ENCODE measurements at regions of chr1 and their contacts with region 1.

Region 1: GRCh38 chr1:156226116-156226538 is 13.3 kb downstream of the PMF1 start:
- DNase-seq: no peak
- H3K4me3 ChIP-seq: no peak overlapping the region
- H3K27ac ChIP-seq: no peak overlapping the region
- H3K4me1 ChIP-seq: 0 out of 2 replicates have a peak, but pooled peaks cover 5% of the 10 kb centered on the region
- H3K27me3 ChIP-seq: no peaks in the 10 kb centered on the region
- CTCF ChIP-seq: no peak

Region 2: GRCh38 chr1:155989242-155990004 is 236.7 kb before region 1 on chr1:
- CTCF ChIA-PET with region 1: interaction called, 11 read pairs
- POLR2A ChIA-PET with region 1: no interaction called
- intact Hi-C with region 1: no loop called
- DNase-seq: peak in 1 of 2 experiments; percentile 70
- H3K4me3 ChIP-seq: no peak overlapping the region
- H3K27ac ChIP-seq: no peak overlapping the region
- H3K4me1 ChIP-seq: peaks cover 16% of the 10 kb centered on the region
- H3K27me3 ChIP-seq: no peaks in the 10 kb centered on the region
- CTCF ChIP-seq: peak; percentile 96

Region 3: DNA sequence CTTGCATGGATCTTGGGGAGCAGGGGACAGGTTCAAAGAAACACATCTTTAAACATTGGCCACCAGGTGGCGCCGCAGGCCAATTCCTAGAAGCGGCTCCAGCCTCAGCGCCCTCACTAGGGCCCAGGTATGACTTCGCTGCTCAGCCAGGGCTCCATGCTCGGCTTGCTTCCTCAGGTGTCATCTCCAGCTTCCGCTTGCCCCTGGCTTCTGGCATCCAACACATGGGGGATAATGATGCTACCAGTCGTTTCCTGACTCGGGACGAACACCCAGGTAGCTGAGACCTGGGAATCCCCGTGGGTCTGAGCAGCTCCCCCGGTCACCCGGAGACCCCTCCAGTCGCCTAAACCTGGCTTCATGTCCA is 135.3 kb before region 1 on chr1:
- CTCF ChIA-PET with region 1: interaction called, 3 read pairs
- POLR2A ChIA-PET with region 1: no interaction called
- intact Hi-C with region 1: loop called (anchors 1 kb)
- DNase-seq: peak; percentile 81 to 84
- H3K4me3 ChIP-seq: no peak overlapping the region
- H3K27ac ChIP-seq: no peak overlapping the region
- H3K4me1 ChIP-seq: peaks cover 31% of the 10 kb centered on the region
- H3K27me3 ChIP-seq: no peaks in the 10 kb centered on the region
- CTCF ChIP-seq: peak; percentile 92

Region 4: DNA sequence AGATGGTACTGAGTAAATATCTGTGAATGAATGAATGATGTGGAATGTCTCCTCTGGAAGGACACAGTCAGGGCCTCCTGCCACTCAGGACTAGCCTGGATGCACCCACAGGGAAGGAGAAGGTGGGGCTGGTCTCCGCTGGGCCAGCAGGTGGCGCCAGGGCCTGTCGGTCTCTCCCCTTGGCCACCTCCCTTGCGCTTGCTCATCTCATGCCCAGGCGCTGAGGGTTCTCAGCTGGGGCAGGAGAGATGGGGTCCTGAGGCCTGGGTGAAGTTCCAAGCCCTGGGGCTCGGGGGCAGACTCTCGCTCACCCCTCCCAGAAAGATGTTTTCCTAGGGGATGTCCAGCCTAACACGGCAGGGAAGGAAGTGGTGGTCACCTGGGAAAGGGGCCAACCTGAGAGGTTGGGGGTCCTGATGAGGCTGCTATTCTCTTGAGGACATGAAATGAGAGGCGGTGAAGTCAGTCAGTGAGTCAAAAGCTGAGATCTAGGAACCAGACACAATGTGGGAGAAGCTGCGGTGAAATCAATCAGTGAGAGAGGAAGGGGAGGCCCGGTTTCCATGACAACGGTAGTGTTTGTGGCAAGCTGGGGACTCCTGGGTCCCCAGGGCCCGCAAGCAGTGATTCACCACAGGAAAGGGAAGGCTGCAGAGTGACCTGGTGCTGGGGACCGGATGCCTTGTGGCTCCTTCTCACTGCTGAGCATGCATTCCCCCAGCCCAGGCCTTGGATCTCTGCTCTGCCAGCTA is 129.3 kb before region 1 on chr1:
- CTCF ChIA-PET with region 1: interaction called, 3 read pairs
- POLR2A ChIA-PET with region 1: interaction called, 29 read pairs
- intact Hi-C with region 1: no loop called
- DNase-seq: peak; percentile 68 to 88
- H3K4me3 ChIP-seq: no peak overlapping the region
- H3K27ac ChIP-seq: peak overlapping the region; percentile 13; the same call in 1 of the 2 replicates
- H3K4me1 ChIP-seq: peaks cover 48% of the 10 kb centered on the region
- H3K27me3 ChIP-seq: no peaks in the 10 kb centered on the region
- CTCF ChIP-seq: peak; percentile 95

Region 5: GRCh38 chr1:156247460-156248322 is 21.6 kb after region 1 on chr1 and contains the start of gene PAQR6:
- CTCF ChIA-PET with region 1: no interaction called
- POLR2A ChIA-PET with region 1: no interaction called
- intact Hi-C with region 1: no loop called
- DNase-seq: no peak
- H3K4me3 ChIP-seq: no peak within 1 kb of the TSS
- H3K27ac ChIP-seq: no peak within 1 kb of the TSS
- H3K4me1 ChIP-seq: no peaks in the 10 kb centered on the region
- H3K27me3 ChIP-seq: no peaks in the 10 kb centered on the region
- CTCF ChIP-seq: no peak
- total RNA-seq, gene PAQR6: 12.3 and 14.1 TPM in 2 replicates

Region 6: DNA sequence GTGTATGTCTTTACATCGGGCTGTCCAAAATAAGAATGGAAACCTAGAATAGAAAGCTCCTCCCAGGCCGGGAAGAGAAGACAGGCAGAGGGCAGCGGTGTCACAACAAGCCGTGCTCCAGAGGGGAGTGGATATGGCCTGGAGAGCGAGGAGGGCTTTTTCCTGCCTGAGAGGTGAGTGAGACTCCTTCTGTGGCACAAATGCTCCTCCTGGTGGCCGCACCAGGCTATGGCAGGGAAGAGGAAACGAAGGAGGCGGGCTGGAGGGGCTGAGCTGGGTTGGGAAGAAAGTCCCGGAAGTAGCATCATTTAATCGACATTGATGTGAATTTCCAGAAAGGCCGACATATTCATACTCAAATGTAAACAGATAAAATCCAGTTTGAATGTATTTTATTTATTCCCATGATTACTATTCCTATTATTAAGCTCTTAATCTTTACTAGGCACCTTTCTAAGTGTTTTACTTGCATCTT is 219.7 kb after region 1 on chr1:
- CTCF ChIA-PET with region 1: no interaction called
- POLR2A ChIA-PET with region 1: no interaction called
- intact Hi-C with region 1: loop called (anchors 5 kb)
- DNase-seq: peak; percentile 68 to 88
- H3K4me3 ChIP-seq: no peak overlapping the region
- H3K27ac ChIP-seq: no peak overlapping the region
- H3K4me1 ChIP-seq: no peaks in the 10 kb centered on the region
- H3K27me3 ChIP-seq: peaks cover 8% of the 10 kb centered on the region
- CTCF ChIP-seq: peak; percentile 98

Measured in PC-9 (cell line).